ENCODE measurements at regions of chr2 and their contacts with region 1.

Region 1: DNA sequence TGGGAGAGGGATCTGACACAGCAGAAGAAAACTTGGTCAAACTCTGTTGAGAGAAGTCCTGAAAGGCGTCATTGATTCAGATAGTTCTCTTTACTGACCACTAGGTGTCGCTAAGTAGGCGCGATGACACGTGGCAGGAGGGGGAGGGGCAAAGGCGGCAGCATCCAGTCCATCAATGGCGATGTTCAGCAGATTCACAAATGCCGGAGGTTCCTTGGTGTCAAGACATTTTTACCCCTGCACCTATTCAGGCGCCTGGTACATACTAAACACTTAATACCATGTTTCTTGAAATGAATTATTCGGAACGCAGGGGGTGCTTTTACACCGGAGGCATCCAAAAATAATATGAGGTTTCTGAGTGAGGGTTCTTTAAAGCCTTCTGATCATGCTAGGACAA is 3.0 kb upstream of the PLEK start:
- DNase-seq: peak; percentile 67 to 77
- H3K4me3 ChIP-seq: peak overlapping the region in 1 of 2 donors; percentile 31
- H3K27ac ChIP-seq: no peak overlapping the region
- H3K4me1 ChIP-seq: no peaks in the 10 kb centered on the region
- H3K27me3 ChIP-seq: no peaks in the 10 kb centered on the region
- CTCF ChIP-seq: peak; percentile 70 to 80

Region 2: DNA sequence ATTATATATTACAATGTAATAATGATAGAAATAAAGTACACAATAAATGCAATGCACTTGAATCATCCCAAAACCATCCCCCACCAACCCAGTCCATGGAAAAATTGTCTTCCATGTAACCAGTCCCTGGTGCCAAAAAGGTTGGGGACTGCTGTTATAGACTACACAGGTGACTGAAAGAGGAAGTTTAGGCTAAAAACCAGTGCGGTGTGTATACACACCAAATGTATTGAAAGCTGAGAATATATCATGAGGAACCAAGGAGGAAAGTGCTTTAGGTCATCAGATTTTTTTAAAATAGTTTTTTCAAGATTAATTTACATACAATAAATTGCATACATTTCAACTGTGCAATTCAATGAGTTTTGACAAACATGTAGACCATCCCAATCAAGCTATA is 278.7 kb before region 1 on chr2:
- intact Hi-C with region 1: no loop called
- DNase-seq: no peak
- H3K4me3 ChIP-seq: no peak overlapping the region
- H3K27ac ChIP-seq: no peak overlapping the region
- H3K4me1 ChIP-seq: no peaks in the 10 kb centered on the region
- H3K27me3 ChIP-seq: no peaks in the 10 kb centered on the region
- CTCF ChIP-seq: no peak

Region 3: GRCh38 chr2:68441179-68441993 is 79.3 kb after region 1 on chr2:
- intact Hi-C with region 1: loop called (anchors 5 kb)
- DNase-seq: peak; percentile 88 to 89
- H3K4me3 ChIP-seq: no peak overlapping the region
- H3K27ac ChIP-seq: peak overlapping the region; percentile 51 to 83
- H3K4me1 ChIP-seq: peaks cover 0 to 34% (median 16%) of the 10 kb centered on the region in 4 donors
- H3K27me3 ChIP-seq: no peaks in the 10 kb centered on the region
- CTCF ChIP-seq: peak; percentile 92 to 94